ENCODE measurements at regions of chr18 and their contacts with region 1.

Region 1: DNA sequence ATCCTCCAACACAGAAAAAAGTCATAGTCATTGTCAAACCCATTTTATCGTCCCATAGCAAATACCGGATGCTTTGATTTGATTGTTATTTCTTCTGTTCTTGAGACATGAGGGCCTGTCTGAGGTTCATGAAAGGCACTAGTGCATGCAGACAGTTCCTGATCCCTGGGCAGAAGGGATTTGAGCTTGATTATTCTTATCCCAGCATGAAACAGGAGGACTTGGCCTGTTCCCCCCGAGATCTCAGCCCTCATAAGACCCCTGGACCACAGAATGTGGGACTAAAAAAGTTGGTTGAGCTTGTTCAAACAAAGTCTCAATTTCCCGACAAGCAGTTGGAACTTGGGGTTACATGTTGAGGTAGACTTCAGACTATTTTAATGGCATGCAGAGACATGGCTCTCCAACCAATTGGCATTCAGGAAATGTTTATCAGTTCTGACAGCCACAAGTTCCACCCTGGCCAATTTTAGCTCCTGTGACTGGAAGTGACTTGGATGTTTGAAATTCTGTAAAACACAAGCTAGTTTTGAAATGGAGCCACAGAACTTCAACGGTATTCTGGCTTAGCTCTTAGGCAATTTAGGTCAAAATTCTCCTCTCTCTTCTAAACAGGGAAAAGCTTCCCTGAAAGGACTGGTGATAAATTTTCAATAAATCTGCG is 366.9 kb upstream of the SLC14A2 start:
- DNase-seq: peak in 1 of 2 donors; percentile 88
- H3K4me3 ChIP-seq: no peak overlapping the region
- H3K27ac ChIP-seq: peak overlapping the region; percentile 89 to 92
- H3K4me1 ChIP-seq: peaks cover 9 to 31% of the 10 kb centered on the region in 2 donors
- H3K27me3 ChIP-seq: no peaks in the 10 kb centered on the region
- CTCF ChIP-seq: no peak

Region 2: GRCh38 chr18:44589693-44590355 is 658.5 kb before region 1 on chr18:
- intact Hi-C with region 1: loop called (anchors 10 kb)
- DNase-seq: no peak
- H3K4me3 ChIP-seq: no peak overlapping the region
- H3K27ac ChIP-seq: peak overlapping the region; percentile 80 to 87
- H3K4me1 ChIP-seq: peaks cover 6 to 37% of the 10 kb centered on the region in 2 donors
- H3K27me3 ChIP-seq: no peaks in the 10 kb centered on the region
- CTCF ChIP-seq: no peak

Region 3: GRCh38 chr18:44917216-44918141 is 330.9 kb before region 1 on chr18:
- intact Hi-C with region 1: loop called (anchors 10 kb)
- DNase-seq: no peak
- H3K4me3 ChIP-seq: no peak overlapping the region
- H3K27ac ChIP-seq: peak overlapping the region; percentile 81 to 89
- H3K4me1 ChIP-seq: peaks cover 13 to 26% of the 10 kb centered on the region in 2 donors
- H3K27me3 ChIP-seq: no peaks in the 10 kb centered on the region
- CTCF ChIP-seq: no peak

Region 4: DNA sequence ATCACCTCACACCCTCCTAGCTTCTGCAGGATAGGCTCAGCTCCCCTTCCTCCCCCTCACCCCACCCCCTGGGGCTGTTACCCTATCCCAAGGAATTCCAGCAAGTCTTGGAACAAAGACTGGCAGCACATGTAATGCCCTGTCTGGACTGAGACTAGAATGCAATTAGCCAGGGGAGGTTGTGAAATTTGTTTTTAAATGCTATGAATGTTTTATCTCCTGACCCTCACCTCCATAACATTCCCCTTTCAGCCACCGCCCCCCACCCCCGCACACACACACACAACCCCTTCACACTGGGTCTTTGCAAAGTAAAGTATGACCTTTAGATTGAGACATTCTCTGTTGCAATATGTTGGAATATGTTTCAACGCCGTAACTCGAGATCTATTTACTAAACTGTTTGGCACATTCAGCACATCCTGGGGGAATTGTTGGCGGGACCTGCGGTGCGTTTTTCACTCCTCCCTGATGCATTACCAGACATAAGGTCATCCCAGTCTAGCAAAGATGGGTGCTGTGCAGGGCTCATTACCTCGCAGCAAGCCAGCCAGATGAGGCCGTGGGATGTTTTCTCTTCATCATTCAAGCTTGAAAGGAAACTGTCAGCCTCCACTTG is 76.2 kb after region 1 on chr18:
- intact Hi-C with region 1: loop called (anchors 5 kb)
- DNase-seq: peak in 1 of 2 donors; percentile 83
- H3K4me3 ChIP-seq: no peak overlapping the region
- H3K27ac ChIP-seq: peak overlapping the region; percentile 10 to 23
- H3K4me1 ChIP-seq: peaks cover 6 to 8% of the 10 kb centered on the region in 2 donors
- H3K27me3 ChIP-seq: no peaks in the 10 kb centered on the region
- CTCF ChIP-seq: no peak

Region 5: GRCh38 chr18:45637546-45638327 is 389.4 kb after region 1 on chr18:
- intact Hi-C with region 1: loop called (anchors 5 kb)
- DNase-seq: peak in 1 of 2 donors; percentile 88
- H3K4me3 ChIP-seq: no peak overlapping the region
- H3K27ac ChIP-seq: peak overlapping the region; percentile 94 to 96
- H3K4me1 ChIP-seq: peaks cover 16 to 37% of the 10 kb centered on the region in 2 donors
- H3K27me3 ChIP-seq: no peaks in the 10 kb centered on the region
- CTCF ChIP-seq: no peak